HepG2 (cell line): ENCODE measurements at regions of chr4 and their contacts with region 1.

Region 1: DNA sequence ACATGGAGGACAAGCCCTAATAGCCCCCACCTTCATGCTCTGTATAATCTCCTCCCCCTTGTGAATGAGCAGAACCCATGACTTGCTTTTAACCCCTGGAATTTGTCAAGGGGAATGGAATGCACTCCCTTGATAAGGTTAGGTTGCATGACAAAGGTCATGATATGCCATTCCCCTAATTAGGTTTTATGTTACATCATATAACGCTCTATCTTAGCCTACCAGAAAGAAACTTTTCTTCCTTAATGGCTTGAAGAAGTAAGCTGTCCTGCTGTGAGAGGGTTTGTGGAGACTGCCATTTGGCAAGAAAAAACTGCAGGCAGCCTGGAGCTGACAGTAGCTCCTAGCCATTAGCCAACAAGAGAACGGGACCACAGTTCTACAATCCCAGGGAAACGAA is 399.8 kb upstream of the MAD2L1 start:
- DNase-seq: no peak
- ATAC-seq: no peak
- H3K4me3 ChIP-seq: no peak overlapping the region
- H3K27ac ChIP-seq: no peak overlapping the region
- H3K4me1 ChIP-seq: no peaks in the 10 kb centered on the region
- H3K27me3 ChIP-seq: no peaks in the 10 kb centered on the region
- CTCF ChIP-seq: no peak
- EP300 ChIP-seq: no peak
- POLR2A ChIP-seq: no peak
- RAD21 ChIP-seq: no peak

Region 2: GRCh38 chr4:120354381-120354780 is 112.0 kb before region 1 on chr4:
- CTCF ChIA-PET with region 1: no interaction called
- POLR2A ChIA-PET with region 1: no interaction called
- in situ Hi-C with region 1: no loop called
- intact Hi-C with region 1: loop called (anchors 10 kb)
- DNase-seq: no peak
- ATAC-seq: no peak
- H3K4me3 ChIP-seq: no peak overlapping the region
- H3K27ac ChIP-seq: no peak overlapping the region
- H3K4me1 ChIP-seq: no peaks in the 10 kb centered on the region
- H3K27me3 ChIP-seq: no peaks in the 10 kb centered on the region
- CTCF ChIP-seq: no peak
- EP300 ChIP-seq: no peak
- POLR2A ChIP-seq: no peak
- RAD21 ChIP-seq: no peak